Heart left ventricle (tissue), 16 donors: ENCODE measurements at regions of chr1 and their contacts with region 1.

Region 1: GRCh38 chr1:245045087-245045881 is 109.5 kb upstream of the KIF26B start:
- DNase-seq: peak in 3 of 5 donors; percentile 51 to 79 (median 57)
- ATAC-seq: peak; percentile 45 to 85 (median 60)
- H3K4me3 ChIP-seq: peak overlapping the region in 1 of 12 donors; percentile 12
- H3K27ac ChIP-seq: peak overlapping the region in 4 of 12 donors; percentile 17 to 45 (median 38)
- H3K4me1 ChIP-seq: peaks cover 0 to 28% (median 7%) of the 10 kb centered on the region in 12 donors
- H3K27me3 ChIP-seq: no peaks in the 10 kb centered on the region
- CTCF ChIP-seq: no peak
- POLR2A ChIP-seq: peak in 1 of 2 donors; percentile 12

Region 2: GRCh38 chr1:244605835-244606370 is 439.4 kb before region 1 on chr1:
- intact Hi-C with region 1: loop called (anchors 2 to 10 kb)
- DNase-seq: no peak
- ATAC-seq: no peak
- H3K4me3 ChIP-seq: no peak overlapping the region
- H3K27ac ChIP-seq: no peak overlapping the region
- H3K4me1 ChIP-seq: no peaks in the 10 kb centered on the region
- H3K27me3 ChIP-seq: peaks cover 0 to 5% (median 0%) of the 10 kb centered on the region in 9 donors
- CTCF ChIP-seq: no peak
- POLR2A ChIP-seq: no peak

Region 3: DNA sequence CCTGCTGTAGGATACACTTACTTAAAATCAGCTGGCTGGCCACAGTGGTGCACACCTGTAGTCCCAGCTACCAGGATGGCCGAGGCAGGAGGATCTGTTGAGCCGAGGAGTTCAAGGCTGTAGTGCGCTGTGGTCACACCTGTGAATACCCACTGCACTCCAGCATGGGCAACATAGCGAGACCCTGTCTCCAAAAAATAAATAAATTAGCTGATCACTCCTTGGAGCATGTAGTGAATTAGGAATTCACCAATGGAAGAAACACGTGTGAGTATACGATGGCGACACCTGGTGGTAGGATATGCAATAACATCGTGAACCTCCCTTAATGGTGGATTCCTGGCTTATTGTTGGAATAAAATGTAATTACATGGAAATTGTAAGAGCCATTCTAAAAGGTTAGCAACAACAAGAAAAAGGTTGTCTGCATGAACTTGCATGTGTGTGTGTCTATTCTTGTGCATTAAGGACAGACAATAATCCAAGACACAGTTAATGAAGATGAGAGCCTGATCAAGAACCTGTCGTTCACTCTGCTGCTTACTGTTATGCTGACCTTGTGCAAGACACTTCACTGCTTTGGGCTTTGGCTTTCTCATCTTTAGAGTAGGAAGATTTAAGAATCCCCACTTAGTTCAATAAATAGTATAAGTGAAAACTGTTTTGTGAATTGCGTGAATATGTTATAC is 248.4 kb before region 1 on chr1:
- intact Hi-C with region 1: loop called in 9 of 10 experiments (anchors 1 to 5 kb)
- DNase-seq: peak in 4 of 5 donors; percentile 35 to 60 (median 46)
- ATAC-seq: peak in 3 of 4 donors; percentile 58 to 68 (median 63)
- H3K4me3 ChIP-seq: no peak overlapping the region
- H3K27ac ChIP-seq: no peak overlapping the region
- H3K4me1 ChIP-seq: peaks cover 0 to 4% (median 0%) of the 10 kb centered on the region in 12 donors
- H3K27me3 ChIP-seq: no peaks in the 10 kb centered on the region
- CTCF ChIP-seq: peak; percentile 79 to 91 (median 88)
- POLR2A ChIP-seq: no peak

Region 4: DNA sequence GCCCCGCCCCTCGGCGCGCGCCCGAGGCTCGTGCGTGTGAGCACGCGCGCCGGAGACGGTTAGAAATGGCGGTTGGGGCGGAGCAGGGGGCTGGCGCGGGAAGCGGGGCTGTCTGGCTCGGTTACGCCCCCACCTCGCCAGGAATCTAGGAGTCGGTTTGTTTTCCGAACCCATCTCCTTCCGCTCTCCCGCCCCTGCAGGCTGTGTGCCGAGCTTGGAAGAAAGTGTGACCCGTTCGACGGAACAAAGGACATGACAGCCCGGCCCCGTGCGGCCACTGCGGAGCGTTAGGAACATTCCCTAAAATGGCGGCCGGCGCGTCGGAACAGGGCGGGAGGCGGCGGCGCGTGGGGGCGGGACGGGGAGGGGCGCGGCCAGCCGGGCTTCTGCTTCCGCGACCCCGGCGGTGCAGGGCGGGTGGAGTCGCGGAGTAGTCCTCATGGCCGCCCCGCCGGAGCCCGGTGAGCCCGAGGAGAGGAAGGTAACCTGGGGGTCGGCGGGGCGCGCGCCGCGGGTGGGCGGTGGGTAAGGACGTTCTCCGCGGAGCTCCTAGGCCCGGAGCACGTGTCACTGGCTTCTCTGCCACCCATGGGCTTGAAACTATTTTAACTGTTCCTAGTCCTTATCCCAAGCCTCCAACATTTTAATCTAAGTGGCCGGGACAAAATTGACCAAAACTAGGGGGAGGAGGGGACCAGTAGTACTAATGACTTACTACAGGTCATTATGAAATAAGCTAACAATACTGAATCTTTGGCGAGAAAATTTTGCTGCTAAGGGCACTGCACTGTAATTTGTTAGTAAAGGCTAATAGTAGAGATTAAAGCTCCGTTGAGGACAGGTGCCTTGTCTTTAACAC is 209.8 kb before region 1 on chr1 and contains the start of gene COX20:
- intact Hi-C with region 1: loop called in 5 of 10 experiments (anchors 10 kb)
- DNase-seq: peak; percentile 92 to 94 (median 93)
- ATAC-seq: peak; percentile 80 to 93 (median 87)
- H3K4me3 ChIP-seq: peak within 1 kb of the TSS; percentile 48 to 86 (median 78)
- H3K27ac ChIP-seq: peak within 1 kb of the TSS; percentile 96 to 100 (median 98)
- H3K4me1 ChIP-seq: peaks cover 3 to 53% (median 26%) of the 10 kb centered on the region in 12 donors
- H3K27me3 ChIP-seq: no peaks in the 10 kb centered on the region
- CTCF ChIP-seq: peak in 2 of 12 donors; percentile 13 to 29
- POLR2A ChIP-seq: peak in 1 of 2 donors; percentile 33
- total RNA-seq, gene COX20: 43.5 to 77.4 (median 59.8) TPM

Region 5: DNA sequence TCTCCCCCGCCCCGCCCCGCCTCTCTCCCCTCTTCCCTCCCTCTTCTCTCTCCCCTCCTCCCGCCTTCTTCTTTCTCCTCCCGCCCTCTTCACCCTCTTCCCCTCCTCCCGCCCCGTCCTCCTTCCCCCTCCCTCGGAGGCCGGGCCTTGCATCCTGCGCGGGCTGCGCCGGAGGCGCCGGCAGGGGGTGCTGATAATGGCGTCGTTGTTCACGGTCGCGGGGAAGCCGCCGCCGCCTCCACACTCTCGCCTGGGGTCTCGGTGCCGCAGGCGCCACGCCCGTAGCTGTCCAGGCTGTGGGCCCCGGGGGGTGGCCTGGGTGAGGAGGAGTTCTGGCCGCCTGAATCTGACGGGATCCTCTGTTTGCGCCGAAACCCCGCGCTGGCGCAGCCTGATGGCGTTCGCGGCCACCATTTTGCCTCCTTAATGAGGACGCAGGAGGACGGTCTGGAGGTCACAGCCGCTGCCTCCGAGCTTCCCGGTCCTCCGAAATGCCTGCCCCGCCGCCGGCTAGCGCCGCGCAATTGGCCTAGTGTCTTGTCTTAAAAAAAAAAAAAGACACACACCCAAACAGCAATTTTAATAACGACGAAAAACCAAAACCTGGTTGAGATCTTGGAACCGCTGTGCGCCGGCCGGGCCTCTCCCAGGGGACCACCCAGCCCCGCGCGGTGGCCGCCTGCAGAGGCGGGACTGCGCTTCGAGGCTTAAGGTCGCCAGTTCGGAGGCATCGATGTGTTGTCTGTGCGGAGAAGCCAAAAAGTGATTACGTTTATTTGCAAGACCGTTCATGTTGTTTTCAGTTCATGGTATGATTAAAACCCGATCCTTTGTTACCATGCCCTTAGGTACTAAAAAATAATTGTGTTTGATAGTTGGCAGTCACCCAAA is 74.4 kb before region 1 on chr1:
- intact Hi-C with region 1: loop called in 6 of 10 experiments (anchors 1 to 5 kb)
- DNase-seq: peak; percentile 93 to 97 (median 95)
- ATAC-seq: peak; percentile 80 to 93 (median 90)
- H3K4me3 ChIP-seq: peak overlapping the region; percentile 68 to 95 (median 76)
- H3K27ac ChIP-seq: peak overlapping the region; percentile 97 to 100 (median 99)
- H3K4me1 ChIP-seq: peaks cover 0 to 24% (median 17%) of the 10 kb centered on the region in 12 donors
- H3K27me3 ChIP-seq: no peaks in the 10 kb centered on the region
- CTCF ChIP-seq: peak; percentile 43 to 83 (median 58)
- POLR2A ChIP-seq: peak in 1 of 2 donors; percentile 58